ENCODE measurements at regions of chr13 and their contacts with region 1.

Region 1: GRCh38 chr13:50893211-50893852 is 16.3 kb upstream of the RNASEH2B start:
- DNase-seq: peak; percentile 93
- H3K4me3 ChIP-seq: peak overlapping the region; percentile 56
- H3K27ac ChIP-seq: peak overlapping the region; percentile 96
- H3K4me1 ChIP-seq: peaks cover 95% of the 10 kb centered on the region
- CTCF ChIP-seq: no peak

Region 2: GRCh38 chr13:49996951-49997895 is 896.1 kb before region 1 on chr13 and contains the start of gene TRIM13:
- CTCF ChIA-PET with region 1: no interaction called
- POLR2A ChIA-PET with region 1: no interaction called
- intact Hi-C with region 1: loop called (anchors 2 kb)
- DNase-seq: peak; percentile 92
- H3K4me3 ChIP-seq: peak within 1 kb of the TSS; percentile 94
- H3K27ac ChIP-seq: peak within 1 kb of the TSS; percentile 87
- H3K4me1 ChIP-seq: peaks cover 39% of the 10 kb centered on the region
- CTCF ChIP-seq: peak; percentile 97
- total RNA-seq, gene TRIM13: 9.5 and 12.5 TPM in 2 replicates

Region 3: DNA sequence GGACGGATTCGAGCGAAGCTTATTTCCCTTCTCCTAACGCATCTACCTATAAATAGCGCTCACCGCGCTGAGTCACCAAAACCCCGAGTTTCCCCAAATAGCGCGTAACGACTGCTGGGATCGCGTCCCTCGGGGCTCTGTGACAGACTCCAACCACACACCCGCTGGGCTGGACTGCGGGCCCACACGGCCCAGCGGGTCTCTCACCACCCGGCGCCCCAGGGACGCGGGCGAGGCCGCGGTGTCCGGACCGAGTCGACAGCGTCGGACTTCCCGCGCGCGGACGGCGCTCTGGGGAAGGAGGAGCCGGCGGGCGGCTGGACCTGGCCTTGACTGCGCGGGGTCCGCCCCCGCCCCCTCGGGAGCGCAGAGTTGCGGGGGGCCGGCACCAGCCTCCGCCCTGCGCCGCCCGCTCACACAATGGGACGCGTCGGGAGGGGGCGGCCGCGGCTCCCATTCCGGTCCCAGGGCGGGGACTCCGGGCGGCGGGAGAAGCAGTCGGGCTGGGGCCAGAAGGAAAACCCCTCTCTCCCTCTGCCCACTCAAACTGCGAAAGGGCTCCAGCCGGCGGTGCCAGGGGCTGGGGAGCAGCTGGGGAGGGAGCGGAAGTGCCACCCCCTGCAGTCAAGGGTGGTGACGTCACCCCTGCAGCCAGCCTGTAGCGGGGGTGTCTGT is 769.3 kb before region 1 on chr13:
- CTCF ChIA-PET with region 1: no interaction called
- POLR2A ChIA-PET with region 1: no interaction called
- intact Hi-C with region 1: loop called (anchors 5 kb)
- DNase-seq: no peak
- H3K4me3 ChIP-seq: peak overlapping the region; percentile 81
- H3K27ac ChIP-seq: peak overlapping the region; percentile 56
- H3K4me1 ChIP-seq: peaks cover 64% of the 10 kb centered on the region
- CTCF ChIP-seq: no peak

Region 4: GRCh38 chr13:50594276-50595051 is 298.9 kb before region 1 on chr13:
- CTCF ChIA-PET with region 1: no interaction called
- POLR2A ChIA-PET with region 1: interaction called, 6 read pairs
- intact Hi-C with region 1: loop called (anchors 2 kb)
- DNase-seq: peak; percentile 98
- H3K4me3 ChIP-seq: peak overlapping the region; percentile 50
- H3K27ac ChIP-seq: peak overlapping the region; percentile 98
- H3K4me1 ChIP-seq: peaks cover 84% of the 10 kb centered on the region
- CTCF ChIP-seq: no peak

Region 5: DNA sequence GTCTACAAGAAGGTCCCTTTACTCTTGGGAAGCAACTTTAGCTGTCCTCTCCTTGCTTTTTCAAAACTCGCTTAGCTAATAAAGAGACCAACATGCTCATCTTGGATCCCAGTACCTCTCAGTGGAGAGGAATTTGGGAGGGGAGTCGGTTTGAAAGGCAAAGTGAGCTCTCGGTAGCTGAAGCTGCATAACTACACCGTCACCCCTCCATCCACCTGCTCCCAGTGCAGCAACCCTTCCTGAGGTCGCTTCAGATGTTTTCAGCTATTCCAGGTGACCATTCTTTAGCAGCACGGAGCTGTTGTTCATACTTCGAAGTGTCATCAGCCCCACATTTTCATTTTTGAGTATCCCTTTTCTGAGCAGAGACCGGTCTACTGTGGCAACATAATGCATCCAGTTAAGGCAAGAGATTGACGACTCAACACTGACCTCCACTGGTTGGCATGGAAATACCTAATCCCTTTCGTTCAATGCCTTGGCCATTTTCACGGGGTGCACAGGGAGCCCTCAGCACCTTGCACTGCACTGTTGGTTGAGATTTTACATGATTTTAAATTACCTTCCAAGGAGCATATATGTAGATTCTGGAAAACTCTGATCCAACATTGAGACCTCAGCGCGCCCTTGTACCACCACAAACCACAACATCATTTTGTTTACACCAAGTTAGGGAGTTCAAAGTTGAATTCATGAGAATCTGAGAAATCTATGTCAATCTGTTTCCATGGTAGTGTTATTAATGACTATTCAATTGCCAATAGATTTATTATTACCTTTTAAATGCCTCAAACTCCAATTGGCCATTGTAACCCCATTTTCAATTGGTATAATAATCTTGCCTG is 92.0 kb before region 1 on chr13:
- CTCF ChIA-PET with region 1: interaction called, 4 read pairs
- POLR2A ChIA-PET with region 1: interaction called, 28 read pairs
- intact Hi-C with region 1: no loop called
- DNase-seq: peak; percentile 90
- H3K4me3 ChIP-seq: no peak overlapping the region
- H3K27ac ChIP-seq: peak overlapping the region; percentile 2
- H3K4me1 ChIP-seq: peaks cover 35% of the 10 kb centered on the region
- CTCF ChIP-seq: peak; percentile 93

Region 6: GRCh38 chr13:50864492-50864891 is 28.8 kb before region 1 on chr13:
- CTCF ChIA-PET with region 1: no interaction called
- POLR2A ChIA-PET with region 1: interaction called, 15 read pairs
- intact Hi-C with region 1: no loop called
- DNase-seq: peak; percentile 19
- H3K4me3 ChIP-seq: no peak overlapping the region
- H3K27ac ChIP-seq: no peak overlapping the region
- H3K4me1 ChIP-seq: peaks cover 22% of the 10 kb centered on the region
- CTCF ChIP-seq: no peak

Region 7: GRCh38 chr13:51825165-51825592 is 931.8 kb after region 1 on chr13:
- CTCF ChIA-PET with region 1: no interaction called
- POLR2A ChIA-PET with region 1: no interaction called
- intact Hi-C with region 1: loop called (anchors 10 kb)
- DNase-seq: peak; percentile 72
- H3K4me3 ChIP-seq: peak overlapping the region; percentile 25
- H3K27ac ChIP-seq: peak overlapping the region; percentile 95
- H3K4me1 ChIP-seq: peaks cover 100% of the 10 kb centered on the region
- CTCF ChIP-seq: no peak

Measured in OCI-LY7 (cell line).